Gastrocnemius medialis (tissue), 4 donors: ENCODE measurements at regions of chr2 and their contacts with region 1.

Region 1: GRCh38 chr2:238288650-238289573 is 502 bp upstream of the PER2 start:
- DNase-seq: peak; percentile 93 to 99
- ATAC-seq: peak; percentile 78 to 81
- H3K4me3 ChIP-seq: peak overlapping the region; percentile 56 to 92 (median 74)
- H3K27ac ChIP-seq: peak overlapping the region; percentile 90 to 96 (median 92)
- H3K4me1 ChIP-seq: peaks cover 43 to 45% of the 10 kb centered on the region in 2 donors
- H3K27me3 ChIP-seq: no peaks in the 10 kb centered on the region
- CTCF ChIP-seq: peak; percentile 28 to 47 (median 34)
- POLR2A ChIP-seq: peak; percentile 91 to 96

Region 2: GRCh38 chr2:238139196-238140039 is 149.5 kb before region 1 on chr2:
- in situ Hi-C with region 1: no loop called
- intact Hi-C with region 1: loop called (anchors 2 kb)
- DNase-seq: peak; percentile 38 to 65
- ATAC-seq: peak; percentile 3
- H3K4me3 ChIP-seq: peak overlapping the region; percentile 56 to 89 (median 80)
- H3K27ac ChIP-seq: peak overlapping the region; percentile 91 to 100 (median 98)
- H3K4me1 ChIP-seq: peaks cover 67 to 72% of the 10 kb centered on the region in 2 donors
- H3K27me3 ChIP-seq: no peaks in the 10 kb centered on the region
- CTCF ChIP-seq: peak; percentile 51 to 96 (median 89)
- POLR2A ChIP-seq: no peak

Region 3: GRCh38 chr2:238203094-238203972 is 85.6 kb before region 1 on chr2 and contains the start of gene ILKAP:
- in situ Hi-C with region 1: no loop called
- intact Hi-C with region 1: loop called (anchors 2 kb)
- DNase-seq: peak; percentile 81 to 87
- ATAC-seq: peak; percentile 95 to 96
- H3K4me3 ChIP-seq: peak within 1 kb of the TSS; percentile 56 to 85 (median 66)
- H3K27ac ChIP-seq: peak within 1 kb of the TSS; percentile 83 to 94 (median 91)
- H3K4me1 ChIP-seq: peaks cover 31 to 43% of the 10 kb centered on the region in 2 donors
- H3K27me3 ChIP-seq: no peaks in the 10 kb centered on the region
- CTCF ChIP-seq: peak in 1 of 5 experiments; percentile 24
- POLR2A ChIP-seq: peak; percentile 93 to 97
- total RNA-seq, gene ILKAP: 16.6 to 30.1 (median 23.3) TPM

Region 4: DNA sequence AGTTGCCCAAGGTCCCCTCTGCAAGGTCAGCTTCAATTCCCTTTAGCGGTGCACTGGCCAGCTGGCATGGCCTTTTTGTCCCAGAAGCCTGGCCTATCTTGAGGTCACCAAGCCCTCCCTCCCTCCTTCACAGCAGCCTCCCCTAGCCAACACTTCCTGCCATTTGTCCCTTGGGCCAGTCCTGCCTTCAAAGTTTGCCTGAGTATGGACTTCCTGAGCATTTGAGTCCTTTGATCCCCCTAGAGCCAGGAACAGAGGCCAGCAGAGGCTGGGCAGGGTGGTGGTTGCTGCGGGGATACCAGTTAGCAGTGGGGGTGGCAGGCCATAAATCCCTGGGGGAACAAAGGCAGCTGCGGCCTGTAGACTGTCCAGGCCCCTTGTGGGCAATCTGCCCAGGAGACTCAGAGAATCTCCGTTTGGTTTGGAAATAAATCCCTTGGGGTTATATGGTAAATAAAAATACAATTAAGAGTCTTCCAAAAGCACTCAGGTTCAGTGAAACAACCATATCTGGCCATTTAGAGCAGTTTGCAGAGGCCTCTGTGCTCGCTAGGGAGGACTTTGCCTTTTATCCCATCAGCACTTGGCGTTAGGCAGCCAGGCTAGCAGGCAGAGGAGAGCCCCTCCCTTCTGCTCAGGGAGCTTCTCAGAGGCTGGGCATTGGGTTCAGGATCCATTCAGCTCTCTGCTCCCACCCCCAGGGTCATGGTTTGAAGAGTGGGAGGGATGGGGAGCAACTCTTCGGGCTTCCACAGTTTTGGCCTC is 46.0 kb before region 1 on chr2:
- in situ Hi-C with region 1: no loop called
- intact Hi-C with region 1: loop called (anchors 2 kb)
- DNase-seq: peak; percentile 37 to 81
- ATAC-seq: peak in 1 of 2 donors; percentile 15
- H3K4me3 ChIP-seq: no peak overlapping the region
- H3K27ac ChIP-seq: peak overlapping the region; percentile 66 to 78 (median 74)
- H3K4me1 ChIP-seq: peaks cover 58% of the 10 kb centered on the region in 2 donors
- H3K27me3 ChIP-seq: no peaks in the 10 kb centered on the region
- CTCF ChIP-seq: no peak
- POLR2A ChIP-seq: no peak

Region 5: GRCh38 chr2:238320246-238320647 is 31.3 kb after region 1 on chr2 and contains the start of gene TRAF3IP1:
- in situ Hi-C with region 1: no loop called
- intact Hi-C with region 1: loop called (anchors 1 kb)
- DNase-seq: peak; percentile 83 to 91
- ATAC-seq: peak; percentile 80 to 81
- H3K4me3 ChIP-seq: peak within 1 kb of the TSS; percentile 65 to 74 (median 70)
- H3K27ac ChIP-seq: peak within 1 kb of the TSS; percentile 75 to 89 (median 81)
- H3K4me1 ChIP-seq: peaks cover 21 to 31% of the 10 kb centered on the region in 2 donors
- H3K27me3 ChIP-seq: no peaks in the 10 kb centered on the region
- CTCF ChIP-seq: no peak
- POLR2A ChIP-seq: peak; percentile 50 to 74
- total RNA-seq, gene TRAF3IP1: 8.5 to 20.8 (median 10.9) TPM

Region 6: GRCh38 chr2:238370823-238371372 is 82.0 kb after region 1 on chr2:
- in situ Hi-C with region 1: no loop called
- intact Hi-C with region 1: no loop called
- DNase-seq: no peak
- ATAC-seq: peak; percentile 70 to 74
- H3K4me3 ChIP-seq: no peak overlapping the region
- H3K27ac ChIP-seq: no peak overlapping the region
- H3K4me1 ChIP-seq: peaks cover 0 to 3% of the 10 kb centered on the region in 2 donors
- H3K27me3 ChIP-seq: no peaks in the 10 kb centered on the region
- CTCF ChIP-seq: peak; percentile 60 to 74 (median 68)
- POLR2A ChIP-seq: no peak